MCF 10A (cell line): ENCODE measurements at regions of chrX and their contacts with region 1.

Region 1: DNA sequence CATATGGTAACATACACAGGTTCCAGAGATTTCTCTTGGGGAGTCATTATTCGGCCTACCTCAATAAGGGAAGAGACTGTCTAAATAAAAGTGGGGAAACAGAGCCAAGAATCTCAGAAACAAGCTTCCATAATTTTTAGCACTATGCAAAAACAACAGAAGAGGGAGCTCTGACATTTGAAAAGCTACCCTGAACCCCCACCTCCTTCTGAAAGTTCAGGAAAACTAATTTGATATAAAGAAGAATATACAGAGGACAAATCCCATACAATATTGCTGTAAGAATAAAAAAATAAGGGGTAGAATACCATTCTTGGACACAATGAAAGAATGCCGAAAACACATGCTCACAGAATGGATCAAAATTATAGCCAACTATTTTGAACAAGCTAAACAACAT is 14.3 kb upstream of the ZNF41 start:
- DNase-seq: peak; percentile 41
- H3K4me3 Mint-ChIP-seq: no peak overlapping the region
- H3K27ac Mint-ChIP-seq: no peak overlapping the region
- H3K4me1 Mint-ChIP-seq: no peaks in the 10 kb centered on the region
- H3K27me3 Mint-ChIP-seq: no peaks in the 10 kb centered on the region
- CTCF ChIP-seq: peak; percentile 46

Region 2: GRCh38 chrX:47523297-47523696 is 26.0 kb after region 1 on chrX:
- CTCF ChIA-PET with region 1: interaction called, 36 read pairs
- POLR2A ChIA-PET with region 1: interaction called, 6 read pairs
- intact Hi-C with region 1: loop called (anchors 1 kb)
- DNase-seq: peak; percentile 59
- H3K4me3 Mint-ChIP-seq: peak overlapping the region; percentile 57
- H3K27ac Mint-ChIP-seq: no peak overlapping the region
- H3K4me1 Mint-ChIP-seq: no peaks in the 10 kb centered on the region
- H3K27me3 Mint-ChIP-seq: no peaks in the 10 kb centered on the region
- CTCF ChIP-seq: peak; percentile 75